Left colon (tissue), 2 donors: ENCODE measurements at regions of chr5 and their contacts with region 1.

Region 1: DNA sequence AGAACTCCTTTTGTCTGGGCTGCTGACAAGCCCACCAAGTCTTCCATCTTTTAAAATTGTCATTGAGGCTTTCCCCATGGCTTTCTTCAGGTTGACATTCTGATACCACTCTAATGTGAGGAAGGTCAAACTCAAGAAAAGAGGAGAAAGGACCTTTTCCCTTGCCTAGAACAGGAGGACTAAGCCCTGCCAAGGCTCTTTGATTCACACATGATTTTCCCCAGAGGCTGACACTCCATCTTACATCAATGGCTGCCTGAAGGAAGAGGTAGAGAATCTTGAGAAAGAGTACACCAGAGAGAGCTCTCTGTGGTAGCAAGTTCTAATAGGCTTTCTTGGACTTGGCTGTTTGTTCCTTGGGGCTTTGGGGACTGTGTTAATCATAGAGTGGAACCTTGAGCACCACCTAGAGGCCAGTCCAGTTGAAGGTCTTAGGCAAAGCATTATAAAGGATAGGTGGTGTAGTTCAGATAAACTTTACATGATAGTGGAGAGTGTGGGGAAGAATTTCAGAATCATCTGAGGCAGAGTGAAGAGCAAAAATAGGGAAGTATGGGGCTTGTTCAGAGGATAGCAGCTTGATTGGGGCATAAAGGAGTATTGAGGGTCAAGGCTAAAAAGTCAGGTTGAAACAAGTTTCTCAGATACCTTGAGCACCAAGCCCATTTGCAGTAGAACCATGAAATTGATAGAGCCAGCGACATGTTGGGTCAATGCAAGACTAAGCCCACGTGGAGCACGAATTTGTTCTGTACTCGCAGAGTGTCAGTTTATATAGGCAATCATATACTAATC is 36.7 kb downstream of the NDFIP1 start:
- DNase-seq: peak; percentile 37 to 79
- ATAC-seq: peak; percentile 90

Region 2: DNA sequence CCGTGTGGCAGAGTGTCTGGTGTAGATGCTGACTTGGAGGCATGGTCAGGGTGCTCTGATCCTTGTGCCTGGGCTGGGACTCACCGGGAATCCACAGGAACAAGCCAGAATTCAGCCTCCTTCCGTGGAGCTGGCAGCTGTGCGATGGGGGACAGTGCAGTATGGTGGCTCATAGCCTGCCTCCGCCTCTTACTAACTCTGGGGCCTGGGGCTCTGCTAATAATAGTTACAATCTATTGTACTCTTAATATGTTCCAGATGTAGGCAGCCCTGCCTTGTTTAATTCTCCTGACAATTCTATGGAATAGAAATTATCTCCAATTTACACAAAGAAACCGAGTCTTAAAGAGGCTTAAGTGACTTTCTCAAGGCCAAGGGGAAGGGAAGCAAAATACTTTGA is 344.7 kb before region 1 on chr5:
- intact Hi-C with region 1: no loop called
- DNase-seq: no peak
- ATAC-seq: no peak

Region 3: DNA sequence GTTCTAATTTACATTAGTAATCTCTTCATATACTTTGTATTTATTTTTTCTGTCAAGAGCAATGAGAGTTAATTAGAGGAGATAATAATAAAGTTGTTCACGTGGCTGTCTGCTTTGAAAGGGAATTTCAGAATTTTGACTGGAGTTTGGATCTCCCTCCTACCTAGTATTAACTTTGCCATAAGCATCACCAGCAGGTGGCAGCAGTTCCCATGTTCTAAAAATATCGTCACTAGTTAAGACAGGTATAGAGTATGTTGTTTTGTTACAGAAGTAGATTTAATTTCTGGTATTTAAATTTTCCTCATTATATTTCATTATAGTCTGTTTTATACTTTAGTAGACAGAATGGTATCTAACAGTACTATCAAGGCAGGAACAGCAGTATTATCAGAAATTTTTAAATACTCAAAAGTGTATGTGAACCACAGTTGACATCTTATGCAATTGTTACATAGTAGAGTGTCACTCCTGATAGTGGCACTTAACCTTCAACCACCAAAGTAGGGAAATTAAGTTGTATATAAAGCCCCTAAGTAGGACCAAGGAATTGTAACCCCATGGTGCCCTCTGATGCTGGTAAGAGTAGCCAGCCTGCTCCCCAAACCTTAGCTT is 152.8 kb before region 1 on chr5:
- intact Hi-C with region 1: loop called (anchors 5 to 10 kb)
- DNase-seq: peak; percentile 46 to 86
- ATAC-seq: peak; percentile 78

Region 4: GRCh38 chr5:142012792-142013388 is 132.4 kb before region 1 on chr5 and contains the start of gene GNPDA1:
- intact Hi-C with region 1: loop called in 1 of 2 experiments (anchors 5 kb)
- DNase-seq: peak; percentile 77 to 86
- ATAC-seq: peak; percentile 97
- total RNA-seq, gene GNPDA1: 15.0 to 16.6 TPM